BJ (cell line): ENCODE measurements at regions of chr17 and their contacts with region 1.

Region 1: DNA sequence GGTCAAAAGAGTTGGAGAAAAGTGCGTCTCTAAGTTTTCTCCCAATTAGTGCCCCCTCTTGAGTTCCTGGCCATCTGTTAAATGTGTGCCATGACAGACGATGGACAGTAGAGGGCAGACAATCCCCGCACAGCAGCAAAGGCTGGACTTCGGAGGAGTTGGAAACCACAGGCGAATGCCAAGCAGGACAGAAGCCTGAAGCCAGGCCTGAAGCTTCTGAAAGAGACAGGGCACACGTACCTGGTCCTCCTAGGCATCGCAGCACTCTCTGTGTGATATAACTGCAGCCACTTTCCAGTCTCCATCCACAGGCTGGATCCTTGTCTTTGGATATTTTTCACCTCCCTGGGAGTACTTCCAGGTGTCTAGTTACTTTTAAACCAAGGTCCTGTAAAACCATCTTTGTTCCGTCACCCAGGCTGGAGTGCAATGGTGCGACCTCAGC is 14.5 kb downstream of the C17orf100 start:
- DNase-seq: peak; percentile 25
- H3K4me3 ChIP-seq: no peak overlapping the region
- H3K27me3 ChIP-seq: peaks cover 25% of the 10 kb centered on the region
- CTCF ChIP-seq: peak; percentile 93

Region 2: GRCh38 chr17:6523330-6523729 is 142.8 kb before region 1 on chr17:
- CTCF ChIA-PET with region 1: no interaction called
- POLR2A ChIA-PET with region 1: no interaction called
- DNase-seq: no peak
- H3K4me3 ChIP-seq: no peak overlapping the region
- H3K27me3 ChIP-seq: no peaks in the 10 kb centered on the region
- CTCF ChIP-seq: no peak

Region 3: DNA sequence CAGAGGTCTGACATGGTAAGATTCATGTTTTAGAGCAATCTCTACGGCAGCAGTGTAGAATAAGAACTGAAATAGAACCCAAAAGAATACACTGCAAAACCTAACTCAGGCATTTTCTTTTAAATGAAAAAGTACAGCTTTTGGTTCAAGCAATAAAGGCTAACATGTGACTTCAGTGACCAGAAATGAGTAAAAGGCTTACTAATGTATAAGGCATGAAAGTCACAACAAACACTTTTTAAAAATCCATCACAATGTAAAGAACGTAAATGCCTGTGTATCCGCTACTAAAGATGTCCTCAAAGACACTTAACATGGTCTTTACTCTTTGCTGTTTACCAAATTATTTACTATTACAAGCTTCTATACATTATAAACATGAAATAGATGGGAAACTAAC is 42.2 kb before region 1 on chr17:
- CTCF ChIA-PET with region 1: no interaction called
- POLR2A ChIA-PET with region 1: no interaction called
- DNase-seq: no peak
- H3K4me3 ChIP-seq: no peak overlapping the region
- H3K27me3 ChIP-seq: no peaks in the 10 kb centered on the region
- CTCF ChIP-seq: no peak

Region 4: GRCh38 chr17:6643451-6644125 is 22.5 kb before region 1 on chr17:
- CTCF ChIA-PET with region 1: no interaction called
- POLR2A ChIA-PET with region 1: no interaction called
- DNase-seq: peak; percentile 70
- H3K4me3 ChIP-seq: no peak overlapping the region
- H3K27me3 ChIP-seq: no peaks in the 10 kb centered on the region
- CTCF ChIP-seq: no peak

Region 5: DNA sequence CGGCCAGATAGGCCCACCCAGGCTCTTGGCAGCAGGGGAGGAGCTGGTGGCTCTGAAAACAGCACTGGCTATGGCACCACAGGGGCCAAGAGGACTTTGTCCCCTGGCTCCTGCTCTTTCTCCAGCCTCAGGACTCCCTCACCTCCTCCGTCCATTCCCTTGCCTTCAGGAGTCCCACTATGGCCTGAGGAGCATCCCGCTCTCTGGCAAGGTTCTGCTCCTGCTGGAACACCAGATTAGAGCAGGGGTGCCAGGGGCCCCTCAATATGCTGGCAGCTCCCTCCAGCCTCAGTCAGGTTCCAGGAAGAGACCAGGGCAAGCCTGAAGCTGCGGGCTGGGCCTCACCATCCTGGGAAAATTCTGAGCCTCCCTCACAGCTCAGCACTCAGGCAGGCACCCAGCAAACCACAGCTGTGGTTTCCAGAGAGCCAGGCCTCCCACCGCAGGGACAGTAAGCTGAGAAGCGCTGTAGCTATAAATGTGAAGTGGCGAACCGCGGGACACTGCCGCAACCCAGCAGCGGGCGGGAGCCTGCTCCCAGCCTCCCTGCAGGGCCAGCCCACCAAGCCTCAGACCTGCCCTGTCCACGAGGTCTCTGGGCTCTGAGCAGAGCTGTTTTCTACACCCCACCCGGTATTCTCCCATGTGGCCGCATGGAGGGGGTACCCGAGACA is 11.2 kb after region 1 on chr17:
- CTCF ChIA-PET with region 1: interaction called, 29 read pairs
- POLR2A ChIA-PET with region 1: no interaction called
- DNase-seq: no peak
- H3K4me3 ChIP-seq: no peak overlapping the region
- H3K27me3 ChIP-seq: peaks cover 5% of the 10 kb centered on the region
- CTCF ChIP-seq: no peak

Region 6: GRCh38 chr17:6894206-6894528 is 228.1 kb after region 1 on chr17:
- CTCF ChIA-PET with region 1: interaction called, 28 read pairs
- POLR2A ChIA-PET with region 1: no interaction called
- DNase-seq: no peak
- H3K4me3 ChIP-seq: no peak overlapping the region
- H3K27me3 ChIP-seq: peaks cover 23% of the 10 kb centered on the region
- CTCF ChIP-seq: peak; percentile 40; the same call in 1 of the 2 replicates